ENCODE measurements at regions of chr16 and their contacts with region 1.

Region 1: GRCh38 chr16:46947900-46948547 is 25.4 kb downstream of the DNAJA2 start:
- DNase-seq: peak in 18 of 35 experiments; percentile 7 to 67 (median 26)
- ATAC-seq: peak; percentile 52 to 77 (median 74)
- H3K4me3 ChIP-seq: no peak overlapping the region
- H3K4me3 Mint-ChIP-seq: peak overlapping the region in 1 of 3 donors; percentile 6
- H3K27ac ChIP-seq: no peak overlapping the region
- H3K27ac Mint-ChIP-seq: peak overlapping the region in 1 of 2 donors; percentile 57
- H3K4me1 ChIP-seq: peaks cover 0 to 5% of the 10 kb centered on the region in 2 experiments
- H3K4me1 Mint-ChIP-seq: peaks cover 0 to 12% (median under 1%) of the 10 kb centered on the region in 3 donors
- H3K27me3 ChIP-seq: no peaks in the 10 kb centered on the region
- H3K27me3 Mint-ChIP-seq: no peaks in the 10 kb centered on the region

Region 2: GRCh38 chr16:48164907-48165726 is 1217.1 kb after region 1 on chr16:
- CTCF ChIA-PET with region 1: interaction called, 6 to 11 read pairs
- POLR2A ChIA-PET with region 1: no interaction called
- DNase-seq: peak in 34 of 35 experiments; percentile 16 to 75 (median 46)
- ATAC-seq: peak; percentile 65 to 75 (median 69)
- H3K4me3 ChIP-seq: no peak overlapping the region
- H3K4me3 Mint-ChIP-seq: no peak overlapping the region
- H3K27ac ChIP-seq: no peak overlapping the region
- H3K27ac Mint-ChIP-seq: no peak overlapping the region
- H3K4me1 ChIP-seq: peaks cover 0 to 5% of the 10 kb centered on the region in 2 experiments
- H3K4me1 Mint-ChIP-seq: peaks cover 0 to 4% (median 4%) of the 10 kb centered on the region in 3 donors
- H3K27me3 ChIP-seq: peaks cover 0 to 3% of the 10 kb centered on the region in 2 experiments
- H3K27me3 Mint-ChIP-seq: peaks cover 6 to 8% of the 10 kb centered on the region in 2 donors